AG04449 (cell line): ENCODE measurements at regions of chr9 and their contacts with region 1.

Region 1: GRCh38 chr9:132901856-132902831 is 23.4 kb downstream of the SPACA9 start:
- DNase-seq: peak; percentile 19
- H3K4me3 ChIP-seq: no peak overlapping the region
- CTCF ChIP-seq: peak; percentile 88

Region 2: GRCh38 chr9:132877824-132878694 is 24.1 kb before region 1 on chr9 and contains the start of gene AK8:
- CTCF ChIA-PET with region 1: interaction called, 32 read pairs
- POLR2A ChIA-PET with region 1: interaction called, 3 read pairs
- DNase-seq: no peak
- H3K4me3 ChIP-seq: peak within 1 kb of the TSS; percentile 94
- CTCF ChIP-seq: no peak

Region 3: DNA sequence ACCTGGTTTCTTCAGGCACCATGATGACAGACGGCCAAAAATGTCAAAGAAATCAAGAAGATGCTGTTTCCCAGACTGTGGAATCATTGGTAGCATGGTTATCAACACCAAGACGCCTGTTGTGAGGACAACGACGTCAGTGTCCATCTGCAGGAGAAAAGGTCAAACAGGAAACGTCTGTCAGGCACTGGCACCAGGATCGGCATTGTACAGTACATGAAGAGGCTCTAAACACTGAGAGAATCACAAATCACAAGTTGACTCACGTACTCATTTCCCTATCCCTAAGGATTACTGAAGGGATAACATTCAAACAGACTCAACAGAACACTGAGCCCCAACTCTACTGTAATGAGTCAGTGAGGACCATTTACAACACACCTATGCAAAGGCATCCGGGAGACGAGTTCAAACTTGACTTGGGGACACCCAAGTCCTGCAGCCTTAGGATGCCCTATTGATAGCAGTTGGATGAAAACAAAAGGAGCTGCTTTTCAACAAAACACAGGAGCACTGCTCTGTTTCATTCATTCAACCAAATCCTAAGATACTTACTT is 21.3 kb after region 1 on chr9:
- CTCF ChIA-PET with region 1: interaction called, 193 read pairs
- POLR2A ChIA-PET with region 1: no interaction called
- DNase-seq: no peak
- H3K4me3 ChIP-seq: no peak overlapping the region
- CTCF ChIP-seq: no peak

Region 4: GRCh38 chr9:132931178-132931735 is 29.1 kb after region 1 on chr9:
- CTCF ChIA-PET with region 1: interaction called, 64 read pairs
- POLR2A ChIA-PET with region 1: no interaction called
- DNase-seq: no peak
- H3K4me3 ChIP-seq: no peak overlapping the region
- CTCF ChIP-seq: no peak

Region 5: GRCh38 chr9:132944302-132945185 is 42.4 kb after region 1 on chr9 and contains the start of gene TSC1:
- CTCF ChIA-PET with region 1: interaction called, 32 read pairs
- POLR2A ChIA-PET with region 1: interaction called, 3 read pairs
- DNase-seq: peak; percentile 76
- H3K4me3 ChIP-seq: peak within 1 kb of the TSS; percentile 95
- CTCF ChIP-seq: no peak

Region 6: GRCh38 chr9:132978451-132979131 is 76.4 kb after region 1 on chr9 and contains the start of gene GFI1B:
- CTCF ChIA-PET with region 1: interaction called, 13 read pairs
- POLR2A ChIA-PET with region 1: no interaction called
- DNase-seq: no peak
- H3K4me3 ChIP-seq: no peak within 1 kb of the TSS
- CTCF ChIP-seq: no peak

Region 7: GRCh38 chr9:133014696-133015095 is 112.6 kb after region 1 on chr9:
- CTCF ChIA-PET with region 1: no interaction called
- POLR2A ChIA-PET with region 1: no interaction called
- DNase-seq: no peak
- H3K4me3 ChIP-seq: no peak overlapping the region
- CTCF ChIP-seq: no peak